SK-N-SH (cell line): ENCODE measurements at regions of chrX and their contacts with region 1.

Region 1: DNA sequence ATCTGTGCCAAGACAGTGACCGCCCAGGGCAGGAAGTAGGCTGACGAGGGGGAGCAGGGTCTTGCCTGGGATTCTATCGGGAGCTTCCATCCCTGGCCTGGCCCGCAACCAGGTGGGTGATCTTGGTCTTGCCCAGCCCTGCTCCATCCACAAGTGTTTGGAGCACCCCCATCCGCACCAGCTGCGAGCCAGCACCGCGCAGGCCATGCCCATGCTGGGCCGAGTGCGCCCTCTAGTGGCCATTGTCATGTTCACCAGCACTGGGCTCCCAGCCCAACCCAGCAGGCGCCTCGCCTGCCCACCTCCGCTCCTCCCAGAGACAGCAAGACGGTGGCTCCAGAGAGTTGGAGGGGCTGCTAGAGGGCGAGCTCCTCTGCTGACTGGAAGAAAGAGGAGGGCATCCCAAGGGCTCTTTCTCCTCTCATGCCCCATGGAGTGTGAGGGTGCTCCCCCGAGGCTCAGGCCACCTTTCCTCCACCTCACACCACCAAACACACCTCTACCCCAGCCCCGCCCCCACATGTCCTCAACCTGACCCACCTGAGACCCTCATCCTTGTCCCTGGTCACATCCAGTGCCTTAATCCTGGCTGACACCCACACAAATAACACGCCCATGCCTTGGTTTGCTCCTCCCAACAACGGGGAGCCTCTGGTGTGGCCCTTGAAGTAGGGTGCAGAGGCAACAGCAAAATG is 9.8 kb upstream of the ATP2B3 start:
- DNase-seq: peak; percentile 94
- H3K4me3 ChIP-seq: no peak overlapping the region; a peak in 1 of 4 replicates
- H3K27ac ChIP-seq: no peak overlapping the region
- H3K4me1 ChIP-seq: peaks cover 0 to 7% of the 10 kb centered on the region in 2 experiments; a peak in 1 of 4 replicates
- H3K27me3 ChIP-seq: no peaks in the 10 kb centered on the region
- CTCF ChIP-seq: peak; percentile 92
- EP300 ChIP-seq: no peak
- RAD21 ChIP-seq: peak; percentile 96

Region 2: GRCh38 chrX:153460845-153461244 is 46.8 kb before region 1 on chrX:
- CTCF ChIA-PET with region 1: interaction called, 203 read pairs
- POLR2A ChIA-PET with region 1: interaction called, 3 read pairs
- DNase-seq: peak; percentile 83
- H3K4me3 ChIP-seq: no peak overlapping the region
- H3K27ac ChIP-seq: no peak overlapping the region
- H3K4me1 ChIP-seq: peaks cover 0 to 14% of the 10 kb centered on the region in 2 experiments; a peak in 1 of 4 replicates
- H3K27me3 ChIP-seq: no peaks in the 10 kb centered on the region; the same call in 1 of the 2 replicates
- CTCF ChIP-seq: peak; percentile 86
- EP300 ChIP-seq: no peak
- RAD21 ChIP-seq: peak; percentile 58

Region 3: GRCh38 chrX:153470435-153471363 is 36.9 kb before region 1 on chrX and contains the start of gene HAUS7:
- CTCF ChIA-PET with region 1: interaction called, 203 read pairs
- POLR2A ChIA-PET with region 1: interaction called, 4 read pairs
- DNase-seq: peak; percentile 95
- H3K4me3 ChIP-seq: peak within 1 kb of the TSS; percentile 65 to 73
- H3K27ac ChIP-seq: peak within 1 kb of the TSS in 1 of 2 experiments; percentile 24; a peak in 2 of 4 replicates
- H3K4me1 ChIP-seq: peaks cover 0 to 16% of the 10 kb centered on the region in 2 experiments; a peak in 1 of 4 replicates
- H3K27me3 ChIP-seq: no peaks in the 10 kb centered on the region
- CTCF ChIP-seq: peak; percentile 76
- EP300 ChIP-seq: no peak
- RAD21 ChIP-seq: peak; percentile 83
- polyA plus RNA-seq, gene HAUS7: 27.1 and 39.7 TPM in 2 replicates

Region 4: DNA sequence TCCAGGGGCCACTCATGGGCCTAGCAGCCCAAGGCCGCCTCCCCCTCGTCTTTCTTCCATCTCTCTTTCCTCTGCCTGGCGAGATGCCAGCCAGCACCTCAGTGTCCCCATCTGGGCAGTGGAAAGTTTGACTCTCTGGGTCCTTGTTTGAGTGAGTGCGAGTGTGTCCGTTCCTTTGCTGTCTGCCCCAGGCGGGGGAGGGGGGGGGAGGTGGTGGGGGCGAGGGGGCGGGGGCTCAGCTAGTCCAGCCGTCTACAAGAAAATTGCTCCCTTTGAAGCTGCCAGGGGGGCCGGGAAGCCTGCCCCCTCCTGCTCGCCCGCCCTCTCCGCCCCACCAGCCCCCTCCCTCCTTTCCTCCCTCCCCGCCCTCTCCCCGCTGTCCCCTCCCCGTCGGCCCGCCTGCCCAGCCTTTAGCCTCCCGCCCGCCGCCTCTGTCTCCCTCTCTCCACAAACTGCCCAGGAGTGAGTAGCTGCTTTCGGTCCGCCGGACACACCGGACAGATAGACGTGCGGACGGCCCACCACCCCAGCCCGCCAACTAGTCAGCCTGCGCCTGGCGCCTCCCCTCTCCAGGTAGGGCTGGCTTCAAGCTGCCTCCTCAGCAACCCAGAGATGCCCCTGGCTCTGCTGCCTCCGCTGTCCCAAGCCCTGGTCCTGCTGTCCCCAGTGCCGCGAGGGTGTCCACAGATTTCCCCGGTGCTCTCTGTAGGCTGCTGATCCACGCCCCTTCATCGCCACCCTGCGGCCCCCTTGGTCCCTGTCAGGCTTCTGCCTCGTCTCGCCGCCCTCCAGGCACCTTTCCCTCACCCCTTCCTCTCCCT is 12.9 kb before region 1 on chrX and contains the start of gene BGN:
- CTCF ChIA-PET with region 1: interaction called, 22 read pairs
- POLR2A ChIA-PET with region 1: interaction called, 3 read pairs
- DNase-seq: peak; percentile 68
- H3K4me3 ChIP-seq: peak within 1 kb of the TSS; percentile 39; a peak in 2 of 4 replicates
- H3K27ac ChIP-seq: no peak within 1 kb of the TSS; a peak in 1 of 4 replicates
- H3K4me1 ChIP-seq: peaks cover 8 to 51% of the 10 kb centered on the region in 2 experiments; a peak in 1 of 4 replicates
- H3K27me3 ChIP-seq: no peaks in the 10 kb centered on the region
- CTCF ChIP-seq: peak; percentile 57
- EP300 ChIP-seq: no peak
- RAD21 ChIP-seq: peak; percentile 51
- polyA plus RNA-seq, gene BGN: 15.2 and 28.9 TPM in 2 replicates

Region 5: DNA sequence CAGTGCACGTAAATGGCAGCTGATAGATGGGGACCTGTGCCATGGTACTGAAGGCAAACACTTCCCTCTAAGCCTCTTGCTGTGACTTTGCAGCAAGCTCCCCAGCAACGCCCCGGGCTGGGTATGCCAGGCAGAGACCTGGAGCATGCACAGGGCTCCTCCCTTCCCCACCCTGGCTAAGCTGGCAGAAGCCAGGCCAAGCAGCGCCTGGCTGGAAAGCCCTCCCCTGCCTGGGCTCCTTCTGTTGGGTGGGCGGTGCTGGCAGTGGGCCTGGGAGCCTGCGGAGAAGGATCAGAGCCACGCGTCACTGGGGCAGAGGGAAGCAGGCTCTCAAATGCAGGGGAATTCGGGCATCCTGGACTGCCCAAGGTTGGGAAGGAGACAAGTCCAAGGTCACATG is 13.4 kb after region 1 on chrX:
- CTCF ChIA-PET with region 1: interaction called, 23 read pairs
- POLR2A ChIA-PET with region 1: no interaction called
- DNase-seq: peak; percentile 76
- H3K4me3 ChIP-seq: no peak overlapping the region
- H3K27ac ChIP-seq: peak overlapping the region in 1 of 2 experiments; percentile 58; a peak in 2 of 4 replicates
- H3K4me1 ChIP-seq: peaks cover 0 to 44% of the 10 kb centered on the region in 2 experiments; a peak in 3 of 4 replicates
- H3K27me3 ChIP-seq: peaks cover 40% of the 10 kb centered on the region; the same call in 1 of the 2 replicates
- CTCF ChIP-seq: no peak
- EP300 ChIP-seq: no peak
- RAD21 ChIP-seq: no peak

Region 6: GRCh38 chrX:153527208-153527607 is 19.6 kb after region 1 on chrX:
- CTCF ChIA-PET with region 1: interaction called, 12 read pairs
- POLR2A ChIA-PET with region 1: no interaction called
- DNase-seq: peak; percentile 71
- H3K4me3 ChIP-seq: no peak overlapping the region
- H3K27ac ChIP-seq: peak overlapping the region in 1 of 2 experiments; percentile 92; a peak in 2 of 4 replicates
- H3K4me1 ChIP-seq: peaks cover 0 to 64% of the 10 kb centered on the region in 2 experiments; a peak in 2 of 4 replicates
- H3K27me3 ChIP-seq: peaks cover 37% of the 10 kb centered on the region
- CTCF ChIP-seq: no peak
- EP300 ChIP-seq: no peak; a peak in 1 of 4 replicates
- RAD21 ChIP-seq: no peak